ENCODE measurements at regions of chr16 and their contacts with region 1.

Region 1: DNA sequence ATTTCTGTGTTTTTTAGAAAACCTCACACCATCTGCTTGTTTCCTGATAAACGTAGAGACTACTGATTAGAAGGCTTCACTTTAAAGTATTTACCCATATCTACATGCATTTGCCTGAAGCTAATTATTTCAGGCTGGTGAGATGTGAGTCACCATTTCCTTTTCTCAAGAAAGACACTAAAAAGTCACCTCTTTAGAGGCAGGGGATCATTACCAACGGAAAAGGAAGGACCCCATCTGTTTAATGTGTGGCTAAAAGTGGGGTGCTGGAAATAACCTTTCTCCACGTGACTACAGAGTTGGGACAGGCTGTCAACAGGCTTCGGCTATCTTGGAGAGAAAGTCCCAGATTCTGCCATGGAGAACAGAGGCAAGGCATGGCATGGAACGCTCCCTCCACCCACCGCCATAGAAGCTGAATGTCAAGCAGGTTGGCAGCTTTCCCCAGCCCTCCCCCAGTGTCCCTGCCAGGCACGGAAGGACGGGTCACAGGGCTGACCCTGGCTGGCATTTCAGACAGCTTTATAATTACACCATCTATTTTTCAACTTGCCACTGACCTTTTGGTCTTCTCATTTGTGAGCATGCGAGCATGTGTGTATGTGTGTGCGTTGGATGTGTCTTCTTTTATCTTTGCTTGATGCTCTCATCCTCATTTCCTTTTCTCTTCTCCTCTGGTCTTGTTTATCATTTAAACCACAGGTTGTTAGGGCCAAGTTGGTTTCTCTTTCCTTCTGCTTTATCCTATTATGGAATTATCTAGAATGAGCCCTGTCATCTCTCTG is 157.0 kb downstream of the CPPED1 start:
- DNase-seq: peak; percentile 37
- H3K4me3 Mint-ChIP-seq: peak overlapping the region; percentile 46
- H3K27ac Mint-ChIP-seq: peak overlapping the region; percentile 96
- H3K4me1 Mint-ChIP-seq: peaks cover 28% of the 10 kb centered on the region
- H3K27me3 Mint-ChIP-seq: peaks cover 4% of the 10 kb centered on the region

Region 2: DNA sequence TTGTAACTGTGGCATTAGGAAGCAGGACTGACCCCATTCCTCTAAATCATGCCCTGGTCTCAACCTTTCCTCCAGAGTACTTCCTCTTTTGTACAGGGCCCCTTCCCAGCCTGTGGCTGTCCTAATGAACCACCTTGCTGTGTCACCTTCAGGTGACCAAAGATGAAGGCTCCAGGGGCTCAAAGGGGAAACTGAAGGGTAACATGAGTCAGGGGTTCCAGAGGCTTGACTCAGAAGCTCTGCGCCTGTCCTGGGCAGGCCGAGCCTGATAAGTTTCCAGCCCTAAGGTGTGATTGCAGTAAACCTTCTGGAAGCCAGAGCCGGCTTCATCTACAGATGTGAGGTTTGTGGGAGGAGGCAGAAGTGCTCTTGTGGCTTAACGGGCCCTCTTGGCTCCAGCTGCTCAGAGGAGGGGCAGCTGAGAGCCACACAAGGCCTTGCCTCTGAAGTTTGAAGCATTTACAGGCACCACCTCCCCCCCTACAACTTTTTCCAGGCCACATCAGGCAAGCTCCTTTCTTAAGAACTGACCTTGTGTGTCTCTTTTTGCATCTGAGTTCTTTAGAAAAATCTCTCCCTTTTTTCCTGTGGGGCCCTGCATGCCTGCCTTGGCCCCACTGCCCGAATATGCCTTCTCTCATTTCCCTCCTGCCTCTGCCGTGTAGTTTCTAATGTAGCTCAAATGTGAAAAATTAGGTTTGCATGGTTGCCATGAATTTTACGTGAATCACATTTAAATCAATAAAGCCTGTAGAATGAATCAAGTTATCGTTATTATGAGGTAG is 1552.4 kb before region 1 on chr16:
- intact Hi-C with region 1: loop called (anchors 5 kb)
- DNase-seq: peak; percentile 67
- H3K4me3 Mint-ChIP-seq: peak overlapping the region; percentile 50
- H3K27ac Mint-ChIP-seq: peak overlapping the region; percentile 98
- H3K4me1 Mint-ChIP-seq: peaks cover 75% of the 10 kb centered on the region
- H3K27me3 Mint-ChIP-seq: no peaks in the 10 kb centered on the region

Region 3: DNA sequence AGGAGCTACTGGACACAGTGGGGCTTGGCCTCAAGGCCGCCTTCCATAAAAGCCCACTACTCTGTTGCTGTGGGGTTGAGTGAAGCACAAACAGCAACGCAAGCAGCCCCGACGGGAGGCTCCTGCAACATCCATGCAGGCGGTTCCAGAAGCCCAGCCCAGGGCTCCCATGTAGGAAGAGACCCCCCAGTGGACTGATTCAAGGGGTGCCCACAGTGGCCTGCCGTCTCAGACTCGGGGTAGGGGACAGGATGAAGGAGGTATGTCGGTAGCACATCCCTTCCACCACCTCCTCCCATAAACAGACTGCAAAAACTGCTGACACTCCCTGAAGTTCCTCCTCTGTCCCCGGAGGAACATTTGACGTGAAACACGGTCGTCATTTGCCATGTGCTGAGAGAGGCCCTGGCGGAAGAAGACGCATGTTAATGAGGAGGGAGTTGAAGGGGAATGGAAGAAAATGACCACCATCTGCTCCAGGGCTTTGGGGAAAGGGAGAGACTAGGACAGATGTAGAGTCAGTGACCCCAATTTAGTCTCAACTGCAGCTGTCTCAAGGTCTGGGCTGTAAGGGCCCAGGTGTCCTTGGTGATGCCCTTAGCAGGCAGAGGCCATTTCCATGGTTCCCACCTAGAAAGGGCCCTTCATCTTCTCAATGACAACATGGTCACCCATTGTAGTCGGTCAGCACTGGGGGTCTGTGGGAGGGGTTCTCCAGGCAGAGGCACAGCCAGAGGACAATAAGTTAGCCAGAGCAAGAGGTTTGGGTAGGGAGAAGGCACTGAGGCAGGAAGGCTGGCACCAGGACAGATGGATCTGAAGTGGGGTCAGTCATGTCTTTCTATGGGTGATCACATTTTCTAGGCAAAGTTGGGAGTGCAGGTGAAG is 43.6 kb before region 1 on chr16:
- intact Hi-C with region 1: no loop called
- DNase-seq: no peak
- H3K4me3 Mint-ChIP-seq: no peak overlapping the region
- H3K27ac Mint-ChIP-seq: no peak overlapping the region
- H3K4me1 Mint-ChIP-seq: no peaks in the 10 kb centered on the region
- H3K27me3 Mint-ChIP-seq: peaks cover 2% of the 10 kb centered on the region

Region 4: GRCh38 chr16:12613131-12613991 is 33.3 kb before region 1 on chr16:
- intact Hi-C with region 1: loop called (anchors 1 kb)
- DNase-seq: no peak
- H3K4me3 Mint-ChIP-seq: no peak overlapping the region
- H3K27ac Mint-ChIP-seq: peak overlapping the region; percentile 59
- H3K4me1 Mint-ChIP-seq: peaks cover 27% of the 10 kb centered on the region
- H3K27me3 Mint-ChIP-seq: no peaks in the 10 kb centered on the region

Region 5: GRCh38 chr16:12629271-12629670 is 17.4 kb before region 1 on chr16:
- intact Hi-C with region 1: loop called (anchors 1 kb)
- DNase-seq: no peak
- H3K4me3 Mint-ChIP-seq: no peak overlapping the region
- H3K27ac Mint-ChIP-seq: no peak overlapping the region
- H3K4me1 Mint-ChIP-seq: no peaks in the 10 kb centered on the region
- H3K27me3 Mint-ChIP-seq: peaks cover 19% of the 10 kb centered on the region

Region 6: GRCh38 chr16:12739738-12740137 is 93.1 kb after region 1 on chr16:
- intact Hi-C with region 1: no loop called
- DNase-seq: no peak
- H3K4me3 Mint-ChIP-seq: no peak overlapping the region
- H3K27ac Mint-ChIP-seq: no peak overlapping the region
- H3K4me1 Mint-ChIP-seq: no peaks in the 10 kb centered on the region
- H3K27me3 Mint-ChIP-seq: no peaks in the 10 kb centered on the region

Region 7: DNA sequence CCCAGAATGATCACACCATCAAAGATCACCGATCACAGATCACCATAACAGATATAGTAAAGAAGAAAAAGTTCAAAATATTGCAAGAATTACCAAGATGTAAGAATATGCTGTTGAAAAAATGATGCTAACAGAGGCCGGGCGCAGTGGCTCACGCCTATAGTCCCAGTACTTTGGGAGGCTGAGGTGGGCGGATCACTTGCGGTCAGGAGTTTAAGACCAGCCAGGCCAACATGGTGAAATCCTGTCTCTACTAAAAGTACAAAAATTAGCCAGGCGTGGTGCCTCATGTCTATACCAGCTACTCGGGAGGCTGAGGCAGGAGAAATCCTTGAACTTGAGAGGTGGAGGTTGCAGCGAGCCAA is 103.9 kb after region 1 on chr16:
- intact Hi-C with region 1: loop called (anchors 1 kb)
- DNase-seq: no peak
- H3K4me3 Mint-ChIP-seq: peak overlapping the region; percentile 48
- H3K27ac Mint-ChIP-seq: peak overlapping the region; percentile 91
- H3K4me1 Mint-ChIP-seq: peaks cover 39% of the 10 kb centered on the region
- H3K27me3 Mint-ChIP-seq: no peaks in the 10 kb centered on the region

Region 8: GRCh38 chr16:12803203-12804097 is 156.8 kb after region 1 on chr16 and contains the start of gene CPPED1:
- intact Hi-C with region 1: loop called (anchors 1 kb)
- DNase-seq: peak; percentile 88
- H3K4me3 Mint-ChIP-seq: peak within 1 kb of the TSS; percentile 95
- H3K27ac Mint-ChIP-seq: peak within 1 kb of the TSS; percentile 92
- H3K4me1 Mint-ChIP-seq: peaks cover 34% of the 10 kb centered on the region
- H3K27me3 Mint-ChIP-seq: no peaks in the 10 kb centered on the region
- total RNA-seq, gene CPPED1: 9.0 and 9.5 TPM in 2 replicates

Measured in activated T-helper 2 cell treated with anti-CD3 and anti-CD28 coated beads, Interferon-gamma antibody, Interleukin-2, Interleukin-4, amounts not matched to agents 10 μg/mL and 5 μg/mL and 100 μg/mL, durations not matched to agents 14 hours and 24 hours and 36 hours (primary cell).